ENCODE measurements at regions of chr17 and their contacts with region 1.

Region 1: DNA sequence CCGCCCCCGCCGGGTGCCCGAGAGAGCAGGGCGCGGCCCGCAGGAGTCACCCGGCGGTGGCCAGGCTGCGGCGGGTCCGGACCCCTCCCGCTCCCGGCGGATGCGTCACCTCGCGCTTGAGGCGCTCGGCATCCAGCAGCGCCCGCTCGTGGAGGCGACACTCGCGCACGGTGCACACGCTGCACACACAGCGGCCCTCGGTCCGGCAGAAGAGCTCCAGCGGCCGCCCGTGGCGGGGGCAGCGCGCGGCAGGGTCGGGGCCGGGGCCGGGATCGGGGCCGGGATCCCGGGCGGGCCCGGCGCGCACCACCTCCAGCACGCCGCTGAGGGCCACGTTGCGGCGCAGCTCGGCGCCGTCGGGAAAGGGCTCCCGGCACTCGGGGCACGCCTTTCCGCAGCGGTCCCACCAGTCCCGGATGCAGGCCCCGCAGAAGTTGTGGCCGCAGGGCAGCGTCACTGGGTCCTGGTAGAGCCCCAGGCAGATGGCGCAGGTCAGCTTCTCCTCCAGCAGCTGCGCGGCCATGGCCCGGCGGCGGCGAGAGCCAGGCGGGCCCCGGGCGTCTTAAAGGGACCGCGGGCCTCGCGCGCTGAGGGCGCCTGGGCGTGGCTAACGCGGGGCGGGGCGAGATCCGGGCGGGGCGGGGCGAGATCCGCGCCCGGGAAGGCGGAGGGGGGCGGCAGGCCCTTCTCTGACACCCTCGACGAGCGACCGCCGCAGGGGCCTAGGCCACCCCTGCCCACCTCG is at the start of gene TRIM65:
- DNase-seq: peak; percentile 70 to 79 (median 73)
- H3K4me3 ChIP-seq: peak within 1 kb of the TSS; percentile 61 to 64
- H3K4me3 Mint-ChIP-seq: peak within 1 kb of the TSS; percentile 82 to 90 (median 86)
- H3K27ac ChIP-seq: peak within 1 kb of the TSS; percentile 55
- H3K27ac Mint-ChIP-seq: peak within 1 kb of the TSS; percentile 84 to 97 (median 89)
- H3K4me1 ChIP-seq: peaks cover 28% of the 10 kb centered on the region
- H3K4me1 Mint-ChIP-seq: peaks cover 22 to 28% (median 25%) of the 10 kb centered on the region in 4 donors
- H3K27me3 ChIP-seq: no peaks in the 10 kb centered on the region
- H3K27me3 Mint-ChIP-seq: no peaks in the 10 kb centered on the region
- total RNA-seq, gene TRIM65: 36.5 to 36.9 TPM

Region 2: GRCh38 chr17:75764711-75765421 is 131.7 kb before region 1 on chr17 and contains the start of gene GALK1:
- CTCF ChIA-PET with region 1: interaction called, 11 read pairs
- POLR2A ChIA-PET with region 1: interaction called, 20 read pairs
- intact Hi-C with region 1: no loop called
- DNase-seq: peak; percentile 67 to 73 (median 72)
- H3K4me3 ChIP-seq: peak within 1 kb of the TSS; percentile 42 to 73
- H3K4me3 Mint-ChIP-seq: peak within 1 kb of the TSS; percentile 72 to 83 (median 78)
- H3K27ac ChIP-seq: peak within 1 kb of the TSS; percentile 58
- H3K27ac Mint-ChIP-seq: peak within 1 kb of the TSS; percentile 52 to 88 (median 72)
- H3K4me1 ChIP-seq: peaks cover 17% of the 10 kb centered on the region
- H3K4me1 Mint-ChIP-seq: peaks cover 6 to 26% (median 10%) of the 10 kb centered on the region in 4 donors
- H3K27me3 ChIP-seq: no peaks in the 10 kb centered on the region
- H3K27me3 Mint-ChIP-seq: no peaks in the 10 kb centered on the region
- total RNA-seq, gene GALK1: 25.7 to 25.9 TPM

Region 3: GRCh38 chr17:75784473-75785015 is 112.0 kb before region 1 on chr17 and contains the start of gene UNK:
- CTCF ChIA-PET with region 1: interaction called, 5 read pairs
- POLR2A ChIA-PET with region 1: interaction called, 64 read pairs
- intact Hi-C with region 1: loop called (anchors 2 kb)
- DNase-seq: peak; percentile 97 to 98 (median 98)
- H3K4me3 ChIP-seq: peak within 1 kb of the TSS; percentile 66 to 83
- H3K4me3 Mint-ChIP-seq: peak within 1 kb of the TSS; percentile 88 to 97 (median 94)
- H3K27ac ChIP-seq: peak within 1 kb of the TSS; percentile 100
- H3K27ac Mint-ChIP-seq: peak within 1 kb of the TSS; percentile 95 to 100 (median 99)
- H3K4me1 ChIP-seq: peaks cover 51% of the 10 kb centered on the region
- H3K4me1 Mint-ChIP-seq: peaks cover 26 to 53% (median 42%) of the 10 kb centered on the region in 4 donors
- H3K27me3 ChIP-seq: no peaks in the 10 kb centered on the region
- H3K27me3 Mint-ChIP-seq: peaks cover under 1 to 2% of the 10 kb centered on the region in 2 donors
- total RNA-seq, gene UNK: 45.8 to 48.1 TPM

Region 4: GRCh38 chr17:75845049-75845860 is 51.3 kb before region 1 on chr17:
- CTCF ChIA-PET with region 1: interaction called, 8 read pairs
- POLR2A ChIA-PET with region 1: interaction called, 79 read pairs
- intact Hi-C with region 1: no loop called
- DNase-seq: peak; percentile 44 to 73 (median 49)
- H3K4me3 ChIP-seq: no peak overlapping the region
- H3K4me3 Mint-ChIP-seq: peak overlapping the region; percentile 25 to 50 (median 41)
- H3K27ac ChIP-seq: peak overlapping the region; percentile 90
- H3K27ac Mint-ChIP-seq: peak overlapping the region; percentile 47 to 90 (median 77)
- H3K4me1 ChIP-seq: peaks cover 49% of the 10 kb centered on the region
- H3K4me1 Mint-ChIP-seq: peaks cover 5 to 39% (median 22%) of the 10 kb centered on the region in 4 donors
- H3K27me3 ChIP-seq: no peaks in the 10 kb centered on the region
- H3K27me3 Mint-ChIP-seq: no peaks in the 10 kb centered on the region

Region 5: DNA sequence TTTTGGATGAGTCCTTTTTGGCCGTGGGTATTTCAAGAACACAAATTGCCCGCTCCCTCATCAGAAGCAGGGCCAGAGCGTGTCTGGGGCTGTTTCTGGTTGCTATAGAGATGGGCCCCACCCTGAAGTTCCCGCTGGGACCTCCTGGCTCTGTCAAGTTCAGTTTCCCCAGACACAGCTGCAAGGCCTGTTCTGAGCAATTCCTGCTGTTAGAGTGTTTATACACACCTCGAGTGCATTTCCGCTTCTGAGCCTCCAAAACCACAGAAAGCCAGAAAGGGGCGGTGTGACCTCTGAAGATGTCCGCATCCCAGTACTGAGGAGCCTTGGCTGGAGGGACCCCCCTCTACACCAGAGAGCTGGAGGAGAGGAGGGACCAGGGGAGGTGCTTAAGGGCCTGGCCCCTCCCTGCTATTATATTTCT is 32.1 kb before region 1 on chr17:
- CTCF ChIA-PET with region 1: interaction called, 24 read pairs
- POLR2A ChIA-PET with region 1: interaction called, 39 read pairs
- intact Hi-C with region 1: no loop called
- DNase-seq: peak; percentile 44 to 82 (median 50)
- H3K4me3 ChIP-seq: no peak overlapping the region
- H3K4me3 Mint-ChIP-seq: peak overlapping the region in 7 of 8 donors; percentile 54 to 84 (median 67)
- H3K27ac ChIP-seq: peak overlapping the region; percentile 60
- H3K27ac Mint-ChIP-seq: peak overlapping the region; percentile 90 to 94 (median 93)
- H3K4me1 ChIP-seq: peaks cover 23% of the 10 kb centered on the region
- H3K4me1 Mint-ChIP-seq: peaks cover 15 to 34% (median 25%) of the 10 kb centered on the region in 4 donors
- H3K27me3 ChIP-seq: no peaks in the 10 kb centered on the region
- H3K27me3 Mint-ChIP-seq: no peaks in the 10 kb centered on the region

Region 6: DNA sequence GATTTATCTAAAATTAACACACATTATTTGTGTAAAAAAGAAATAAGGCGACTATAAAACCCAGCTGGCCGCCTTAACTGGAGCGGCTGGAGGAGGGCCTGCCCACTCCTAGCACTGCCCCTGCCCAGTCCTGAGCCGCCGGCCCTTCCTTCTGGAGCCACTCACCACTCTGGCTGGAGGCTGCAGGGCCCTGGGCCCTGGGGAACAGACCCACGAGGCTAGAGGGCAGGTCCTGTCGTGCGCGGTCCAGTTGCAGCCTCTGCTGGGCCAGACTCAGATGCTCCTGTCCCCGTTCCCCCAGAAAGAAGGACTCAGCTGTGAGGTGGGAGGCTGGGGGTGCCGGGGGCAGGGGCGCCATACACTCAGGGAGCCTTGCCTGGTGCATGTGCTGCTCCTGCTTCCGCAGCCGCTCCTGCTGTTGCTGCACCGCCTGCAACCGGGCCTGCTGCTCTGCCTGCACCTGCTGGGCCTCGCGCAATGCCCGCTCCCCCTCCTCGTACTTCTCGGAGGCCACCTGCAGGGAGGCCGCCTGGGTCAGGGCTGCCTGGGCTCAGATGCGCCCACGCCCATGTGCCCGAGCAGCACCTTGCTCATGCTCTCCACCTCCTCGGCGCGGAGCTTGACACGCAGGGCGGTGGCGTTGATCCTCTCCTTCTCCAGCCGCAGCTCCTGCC is 17.1 kb after region 1 on chr17:
- CTCF ChIA-PET with region 1: no interaction called
- POLR2A ChIA-PET with region 1: no interaction called
- intact Hi-C with region 1: no loop called
- DNase-seq: no peak
- H3K4me3 ChIP-seq: no peak overlapping the region
- H3K4me3 Mint-ChIP-seq: no peak overlapping the region
- H3K27ac ChIP-seq: no peak overlapping the region
- H3K27ac Mint-ChIP-seq: no peak overlapping the region
- H3K4me1 ChIP-seq: no peaks in the 10 kb centered on the region
- H3K4me1 Mint-ChIP-seq: peaks cover 0 to 11% (median 4%) of the 10 kb centered on the region in 4 donors
- H3K27me3 ChIP-seq: no peaks in the 10 kb centered on the region
- H3K27me3 Mint-ChIP-seq: no peaks in the 10 kb centered on the region

Region 7: DNA sequence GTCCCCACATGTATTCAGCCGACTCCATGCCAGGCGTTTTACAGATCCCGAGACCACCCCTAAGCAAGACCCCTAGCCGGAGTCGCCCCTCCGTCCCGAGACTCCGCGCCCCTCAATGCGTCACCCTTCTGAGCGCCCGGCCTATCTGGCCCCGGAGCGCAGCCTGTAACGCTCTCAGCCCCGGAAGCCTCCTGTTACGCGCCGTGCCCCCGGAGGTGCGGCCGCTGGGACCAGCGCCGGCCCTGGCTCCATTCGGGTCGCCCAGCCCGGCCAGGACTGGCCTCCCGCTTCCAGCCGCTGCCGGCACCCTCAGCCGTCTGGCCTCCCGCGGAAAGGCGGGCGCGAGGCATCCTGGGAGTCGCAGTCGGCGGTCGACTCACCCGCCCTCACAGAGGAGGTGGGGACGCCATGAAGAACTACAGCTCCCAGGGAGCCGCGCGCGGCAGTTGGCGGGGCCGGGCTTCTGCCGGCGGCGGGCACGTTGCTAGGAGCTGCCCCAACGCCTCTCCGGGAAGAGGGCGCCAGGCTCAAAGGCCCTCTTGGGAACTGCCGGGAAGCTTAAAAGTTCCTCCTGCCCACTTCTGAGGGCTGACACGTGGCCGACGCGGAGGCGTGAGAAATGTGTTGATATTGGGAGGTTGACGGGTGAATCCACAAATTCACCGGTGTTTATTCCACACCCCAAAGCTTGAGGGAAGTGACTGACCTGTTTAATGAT is 44.3 kb after region 1 on chr17 and contains the start of gene FBF1:
- CTCF ChIA-PET with region 1: no interaction called
- POLR2A ChIA-PET with region 1: interaction called, 5 read pairs
- intact Hi-C with region 1: loop called (anchors 2 kb)
- DNase-seq: peak; percentile 82 to 89 (median 84)
- H3K4me3 ChIP-seq: peak within 1 kb of the TSS; percentile 63 to 74
- H3K4me3 Mint-ChIP-seq: peak within 1 kb of the TSS; percentile 84 to 93 (median 90)
- H3K27ac ChIP-seq: peak within 1 kb of the TSS; percentile 86
- H3K27ac Mint-ChIP-seq: peak within 1 kb of the TSS; percentile 48 to 96 (median 92)
- H3K4me1 ChIP-seq: peaks cover 10% of the 10 kb centered on the region
- H3K4me1 Mint-ChIP-seq: peaks cover 7 to 14% (median 10%) of the 10 kb centered on the region in 4 donors
- H3K27me3 ChIP-seq: no peaks in the 10 kb centered on the region
- H3K27me3 Mint-ChIP-seq: no peaks in the 10 kb centered on the region
- total RNA-seq, gene FBF1: 39.6 to 42.7 TPM

Region 8: GRCh38 chr17:76063875-76064546 is 167.4 kb after region 1 on chr17:
- CTCF ChIA-PET with region 1: no interaction called
- POLR2A ChIA-PET with region 1: no interaction called
- intact Hi-C with region 1: no loop called
- DNase-seq: peak; percentile 50 to 78 (median 61)
- H3K4me3 ChIP-seq: no peak overlapping the region
- H3K4me3 Mint-ChIP-seq: peak overlapping the region; percentile 69 to 92 (median 74)
- H3K27ac ChIP-seq: peak overlapping the region; percentile 47
- H3K27ac Mint-ChIP-seq: peak overlapping the region; percentile 92 to 98 (median 97)
- H3K4me1 ChIP-seq: peaks cover 16% of the 10 kb centered on the region
- H3K4me1 Mint-ChIP-seq: peaks cover 18 to 34% (median 22%) of the 10 kb centered on the region in 4 donors
- H3K27me3 ChIP-seq: no peaks in the 10 kb centered on the region
- H3K27me3 Mint-ChIP-seq: no peaks in the 10 kb centered on the region

Measured in CD4-positive, alpha-beta memory T cell (primary cell).